ENCODE measurements at regions of chr9 and their contacts with region 1.

Region 1: GRCh38 chr9:1414701-1415100 is 364.5 kb downstream of the DMRT2 start:
- DNase-seq: no peak
- ATAC-seq: no peak
- H3K4me3 ChIP-seq: no peak overlapping the region
- H3K27ac ChIP-seq: no peak overlapping the region
- H3K4me1 ChIP-seq: no peaks in the 10 kb centered on the region
- H3K27me3 ChIP-seq: no peaks in the 10 kb centered on the region
- CTCF ChIP-seq: no peak

Region 2: DNA sequence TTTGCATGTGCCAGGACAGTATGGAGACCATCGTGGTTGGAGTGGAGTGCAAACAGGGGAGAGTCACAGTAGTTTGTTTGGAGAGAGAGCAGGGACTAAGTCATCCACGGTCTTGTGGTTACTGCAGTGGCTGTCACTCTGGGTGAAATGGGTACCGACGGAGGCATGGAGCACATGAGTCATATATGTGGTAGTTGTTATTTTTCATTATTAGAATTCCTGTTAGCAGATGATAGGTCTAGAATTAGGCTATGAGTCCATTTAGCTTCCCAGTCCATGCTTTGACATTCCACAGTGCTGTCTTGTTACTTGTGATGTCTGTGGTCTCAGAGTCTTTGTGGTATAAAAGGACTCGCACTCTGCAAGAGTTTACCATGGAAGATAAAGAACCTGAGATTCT is 60.6 kb before region 1 on chr9:
- intact Hi-C with region 1: loop called in 2 of 10 experiments (anchors 10 kb)
- DNase-seq: no peak
- ATAC-seq: no peak
- H3K4me3 ChIP-seq: no peak overlapping the region
- H3K27ac ChIP-seq: no peak overlapping the region
- H3K4me1 ChIP-seq: no peaks in the 10 kb centered on the region
- H3K27me3 ChIP-seq: peaks cover 0 to 4% (median 0%) of the 10 kb centered on the region in 7 donors
- CTCF ChIP-seq: no peak